ENCODE measurements at regions of chrX and their contacts with region 1.

Region 1: GRCh38 chrX:132984058-132984650 is 25.7 kb upstream of the HS6ST2 start:
- ATAC-seq: no peak
- H3K4me3 ChIP-seq: no peak overlapping the region
- H3K27ac ChIP-seq: no peak overlapping the region
- H3K4me1 ChIP-seq: no peaks in the 10 kb centered on the region

Region 2: DNA sequence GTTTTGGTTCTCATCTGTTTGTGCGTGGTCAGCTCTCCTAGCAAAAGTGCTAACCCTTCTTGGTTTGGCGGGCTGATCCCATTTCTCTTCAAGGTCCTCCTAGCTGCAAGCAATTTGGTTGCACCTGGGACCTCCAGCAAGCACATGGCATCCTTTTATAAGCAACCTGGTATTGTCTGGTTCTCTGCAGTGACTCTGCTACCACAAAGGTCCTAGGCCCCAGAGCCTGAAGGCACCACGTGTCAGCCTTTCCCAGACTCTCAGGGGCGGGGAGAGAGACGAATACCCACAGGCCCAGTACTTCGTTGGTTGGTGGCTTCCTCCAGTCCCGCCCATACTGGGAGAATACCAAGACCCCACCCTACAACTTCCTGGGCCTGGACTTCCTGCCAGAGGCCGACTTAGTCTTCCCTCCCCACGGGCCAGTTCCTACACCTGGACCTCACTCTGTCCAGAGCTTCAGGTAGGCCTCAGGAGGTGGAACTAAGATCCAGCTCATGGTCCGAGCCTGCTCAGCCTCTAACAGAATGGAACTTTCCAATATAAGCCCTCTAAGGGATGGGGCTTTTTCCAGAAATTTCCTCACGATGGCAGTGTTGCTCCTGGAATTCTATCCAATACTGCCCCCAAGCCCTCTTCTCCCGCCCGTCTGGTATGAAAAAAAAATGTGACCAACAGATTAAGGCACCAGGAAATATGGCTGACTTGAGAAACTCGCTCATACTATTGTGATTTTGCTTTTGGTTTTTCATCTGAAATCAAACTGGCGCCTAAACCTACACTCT is 1153.6 kb before region 1 on chrX:
- in situ Hi-C with region 1: no loop called
- ATAC-seq: peak; percentile 25 to 95 (median 92)
- H3K4me3 ChIP-seq: peak overlapping the region; percentile 13 to 37 (median 33)
- H3K27ac ChIP-seq: peak overlapping the region in 1 of 2 donors; percentile 47
- H3K4me1 ChIP-seq: peaks cover 0 to 5% of the 10 kb centered on the region in 2 donors

Region 3: GRCh38 chrX:133171962-133172708 is 188.0 kb after region 1 on chrX:
- in situ Hi-C with region 1: loop called in 2 of 9 experiments (anchors 25 kb)
- ATAC-seq: peak in 7 of 8 experiments; percentile 36 to 76 (median 43)
- H3K4me3 ChIP-seq: no peak overlapping the region
- H3K27ac ChIP-seq: no peak overlapping the region
- H3K4me1 ChIP-seq: peaks cover 0 to 2% of the 10 kb centered on the region in 2 donors

Region 4: DNA sequence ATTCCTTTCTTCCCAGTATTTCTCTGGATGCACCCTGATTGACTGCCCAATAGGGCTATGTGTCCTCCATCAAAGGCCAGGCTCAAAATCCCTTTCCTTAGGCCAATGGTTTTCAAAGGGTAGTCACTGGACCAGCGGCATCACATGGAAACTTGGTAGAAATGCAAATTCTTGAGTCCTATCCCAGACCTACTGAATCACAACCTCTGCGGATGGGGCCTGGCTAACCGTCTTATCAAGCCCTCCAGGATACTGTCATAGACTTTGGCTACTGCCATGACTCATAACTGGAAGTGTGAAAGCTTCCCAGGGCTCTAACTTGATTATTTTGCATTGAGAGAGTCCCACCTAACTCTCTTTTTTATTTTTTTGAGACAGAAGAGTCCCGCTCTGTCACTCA is 305.9 kb after region 1 on chrX:
- in situ Hi-C with region 1: no loop called
- ATAC-seq: peak in 1 of 8 experiments; percentile 25
- H3K4me3 ChIP-seq: no peak overlapping the region
- H3K27ac ChIP-seq: no peak overlapping the region
- H3K4me1 ChIP-seq: no peaks in the 10 kb centered on the region

Region 5: GRCh38 chrX:133670383-133670782 is 686.2 kb after region 1 on chrX:
- in situ Hi-C with region 1: loop called in 1 of 9 experiments (anchors 25 kb)
- ATAC-seq: peak in 3 of 8 experiments; percentile 26 to 50 (median 28)
- H3K4me3 ChIP-seq: no peak overlapping the region
- H3K27ac ChIP-seq: no peak overlapping the region
- H3K4me1 ChIP-seq: peaks cover 14 to 20% of the 10 kb centered on the region in 2 donors

Measured in motor neuron (in vitro differentiated cells).